ENCODE measurements at regions of chr5 and their contacts with region 1.

Region 1: DNA sequence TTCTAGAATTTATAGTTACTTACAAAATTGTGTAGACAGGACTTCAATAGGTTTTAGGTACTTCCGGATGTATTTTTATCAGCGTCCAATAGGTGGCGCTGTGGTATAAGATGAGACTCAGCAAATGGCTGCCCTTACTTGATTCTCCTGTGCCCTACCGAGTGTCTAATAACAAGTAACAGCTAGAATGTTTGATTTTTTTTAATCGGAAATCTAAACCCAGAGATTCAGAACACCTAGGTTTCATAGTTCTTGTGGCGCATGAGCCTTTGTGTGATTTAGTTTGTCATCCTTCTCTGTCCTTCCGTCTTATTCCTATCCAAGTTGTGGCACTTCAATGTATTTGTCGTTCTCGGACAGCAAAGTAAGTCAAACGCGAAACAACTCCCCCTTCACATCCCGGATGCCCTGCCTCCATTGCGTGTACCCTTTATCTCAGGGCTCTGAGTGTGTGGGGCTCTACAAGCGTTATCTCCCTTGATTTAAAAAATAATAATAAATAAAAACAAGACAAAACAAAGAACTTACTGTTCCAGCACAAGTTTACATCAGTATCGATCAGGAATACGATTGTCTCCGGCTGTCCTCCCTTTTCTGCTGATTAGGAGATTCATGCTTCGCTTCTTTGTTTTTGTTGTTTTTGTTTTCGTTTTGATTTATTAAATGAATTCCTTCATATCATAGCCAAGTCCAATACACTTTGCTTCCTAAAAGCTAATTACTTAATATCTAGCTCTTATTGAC is 50.7 kb upstream of the SLC30A5 start:
- DNase-seq: peak; percentile 91
- ATAC-seq: peak; percentile 96
- H3K4me3 Mint-ChIP-seq: peak overlapping the region; percentile 72
- H3K27ac Mint-ChIP-seq: peak overlapping the region; percentile 81
- H3K4me1 Mint-ChIP-seq: peaks cover 11% of the 10 kb centered on the region
- H3K27me3 Mint-ChIP-seq: no peaks in the 10 kb centered on the region

Region 2: GRCh38 chr5:68942169-68942568 is 100.9 kb before region 1 on chr5:
- CTCF ChIA-PET with region 1: no interaction called
- POLR2A ChIA-PET with region 1: no interaction called
- DNase-seq: no peak
- ATAC-seq: no peak
- H3K4me3 Mint-ChIP-seq: no peak overlapping the region
- H3K27ac Mint-ChIP-seq: no peak overlapping the region
- H3K4me1 Mint-ChIP-seq: no peaks in the 10 kb centered on the region
- H3K27me3 Mint-ChIP-seq: peaks cover 3% of the 10 kb centered on the region

Region 3: GRCh38 chr5:69083412-69083811 is 40.3 kb after region 1 on chr5:
- CTCF ChIA-PET with region 1: interaction called, 19 read pairs
- POLR2A ChIA-PET with region 1: interaction called, 4 read pairs
- DNase-seq: no peak
- ATAC-seq: no peak
- H3K4me3 Mint-ChIP-seq: no peak overlapping the region
- H3K27ac Mint-ChIP-seq: no peak overlapping the region
- H3K4me1 Mint-ChIP-seq: peaks cover 23% of the 10 kb centered on the region
- H3K27me3 Mint-ChIP-seq: no peaks in the 10 kb centered on the region

Region 4: GRCh38 chr5:69334793-69335268 is 291.7 kb after region 1 on chr5:
- CTCF ChIA-PET with region 1: interaction called, 14 read pairs
- POLR2A ChIA-PET with region 1: interaction called, 3 read pairs
- DNase-seq: peak; percentile 87
- ATAC-seq: peak; percentile 70
- H3K4me3 Mint-ChIP-seq: no peak overlapping the region
- H3K27ac Mint-ChIP-seq: no peak overlapping the region
- H3K4me1 Mint-ChIP-seq: peaks cover 21% of the 10 kb centered on the region
- H3K27me3 Mint-ChIP-seq: no peaks in the 10 kb centered on the region

Measured in activated CD8-positive, alpha-beta T cell treated with anti-CD3 and anti-CD28 coated beads, Interleukin-2, amount 10 ng/mL, durations not matched to agents 7 days and 5 days (primary cell).